Caco-2 (cell line): ENCODE measurements at regions of chr3 and their contacts with region 1.

Region 1: GRCh38 chr3:138946181-138947059 is 517 bp downstream of the FOXL2 start:
- DNase-seq: peak in 1 of 2 experiments; percentile 66
- H3K4me3 ChIP-seq: peak overlapping the region; percentile 53
- H3K4me3 Mint-ChIP-seq: peak overlapping the region; percentile 83
- H3K27ac Mint-ChIP-seq: no peak overlapping the region
- H3K4me1 ChIP-seq: peaks cover 5% of the 10 kb centered on the region
- H3K4me1 Mint-ChIP-seq: peaks cover 8% of the 10 kb centered on the region
- H3K27me3 ChIP-seq: peaks cover 1% of the 10 kb centered on the region; the same call in 1 of the 2 replicates
- H3K27me3 Mint-ChIP-seq: peaks cover 20% of the 10 kb centered on the region
- CTCF ChIP-seq: peak; percentile 31 to 43

Region 2: GRCh38 chr3:138148503-138148902 is 797.9 kb before region 1 on chr3:
- CTCF ChIA-PET with region 1: no interaction called
- POLR2A ChIA-PET with region 1: interaction called, 13 read pairs
- intact Hi-C with region 1: no loop called
- DNase-seq: no peak
- H3K4me3 ChIP-seq: no peak overlapping the region
- H3K4me3 Mint-ChIP-seq: no peak overlapping the region
- H3K27ac Mint-ChIP-seq: no peak overlapping the region
- H3K4me1 ChIP-seq: no peaks in the 10 kb centered on the region
- H3K4me1 Mint-ChIP-seq: no peaks in the 10 kb centered on the region
- H3K27me3 ChIP-seq: no peaks in the 10 kb centered on the region
- H3K27me3 Mint-ChIP-seq: no peaks in the 10 kb centered on the region
- CTCF ChIP-seq: no peak

Region 3: GRCh38 chr3:138923531-138923994 is 22.9 kb before region 1 on chr3:
- CTCF ChIA-PET with region 1: interaction called, 14 read pairs
- POLR2A ChIA-PET with region 1: no interaction called
- intact Hi-C with region 1: no loop called
- DNase-seq: peak; percentile 82 to 89
- H3K4me3 ChIP-seq: no peak overlapping the region
- H3K4me3 Mint-ChIP-seq: no peak overlapping the region
- H3K27ac Mint-ChIP-seq: no peak overlapping the region
- H3K4me1 ChIP-seq: no peaks in the 10 kb centered on the region
- H3K4me1 Mint-ChIP-seq: no peaks in the 10 kb centered on the region
- H3K27me3 ChIP-seq: no peaks in the 10 kb centered on the region
- H3K27me3 Mint-ChIP-seq: no peaks in the 10 kb centered on the region
- CTCF ChIP-seq: peak; percentile 81 to 86

Region 4: DNA sequence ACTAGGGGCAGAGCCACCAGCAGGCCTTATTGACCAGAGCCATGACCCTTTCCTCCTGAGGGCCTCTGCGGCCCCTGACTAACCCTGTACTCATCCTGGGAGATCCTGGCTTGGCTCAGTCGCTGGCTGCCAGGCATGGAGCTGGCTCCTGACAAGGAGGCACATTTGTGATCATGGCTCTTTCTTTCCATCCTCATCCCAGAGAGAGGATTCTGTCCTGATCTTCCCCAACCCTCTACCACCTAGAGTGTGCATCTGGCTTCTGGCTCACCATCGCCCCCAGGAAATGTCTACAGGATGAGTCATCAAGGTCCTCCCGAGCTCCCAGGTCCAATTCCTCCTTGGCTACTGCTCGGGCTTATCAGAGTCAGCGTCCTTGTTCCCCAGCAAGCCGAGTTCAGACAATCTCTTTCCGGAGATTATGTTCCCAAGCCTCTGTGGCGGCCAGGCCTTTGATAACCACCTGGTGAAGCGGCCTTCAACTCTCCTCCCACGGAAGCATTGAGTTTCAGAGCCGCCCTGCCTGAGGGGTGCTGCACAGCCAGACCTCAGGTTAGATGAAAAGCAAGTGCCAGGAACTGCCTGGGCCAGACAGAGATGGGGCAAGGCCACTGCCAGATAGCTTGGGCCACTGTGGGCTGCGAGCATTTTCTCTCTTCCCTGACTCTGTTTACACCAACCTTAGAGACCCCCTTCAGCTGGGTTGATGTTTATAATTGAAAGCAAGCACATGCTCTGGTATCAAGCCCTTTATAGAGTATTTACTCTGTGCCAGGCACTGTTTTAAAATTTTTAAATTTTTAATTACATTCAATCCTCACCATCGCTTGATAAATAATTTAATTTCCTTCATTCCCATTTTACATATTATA is 353.1 kb after region 1 on chr3:
- CTCF ChIA-PET with region 1: no interaction called
- POLR2A ChIA-PET with region 1: no interaction called
- intact Hi-C with region 1: no loop called
- DNase-seq: peak; percentile 39 to 81
- H3K4me3 ChIP-seq: no peak overlapping the region
- H3K4me3 Mint-ChIP-seq: no peak overlapping the region
- H3K27ac Mint-ChIP-seq: no peak overlapping the region
- H3K4me1 ChIP-seq: peaks cover 19% of the 10 kb centered on the region; the same call in 1 of the 2 replicates
- H3K4me1 Mint-ChIP-seq: peaks cover 7% of the 10 kb centered on the region
- H3K27me3 ChIP-seq: no peaks in the 10 kb centered on the region
- H3K27me3 Mint-ChIP-seq: no peaks in the 10 kb centered on the region
- CTCF ChIP-seq: no peak

Region 5: GRCh38 chr3:139343895-139344856 is 397.8 kb after region 1 on chr3 and contains the start of gene MRPS22:
- CTCF ChIA-PET with region 1: no interaction called
- POLR2A ChIA-PET with region 1: no interaction called
- intact Hi-C with region 1: loop called (anchors 5 kb)
- DNase-seq: peak; percentile 83 to 84
- H3K4me3 ChIP-seq: peak within 1 kb of the TSS; percentile 96
- H3K4me3 Mint-ChIP-seq: no peak within 1 kb of the TSS
- H3K27ac Mint-ChIP-seq: peak within 1 kb of the TSS; percentile 16
- H3K4me1 ChIP-seq: peaks cover 6% of the 10 kb centered on the region; the same call in 1 of the 2 replicates
- H3K4me1 Mint-ChIP-seq: peaks cover 7% of the 10 kb centered on the region
- H3K27me3 ChIP-seq: no peaks in the 10 kb centered on the region
- H3K27me3 Mint-ChIP-seq: no peaks in the 10 kb centered on the region
- CTCF ChIP-seq: no peak
- total RNA-seq, gene MRPS22: 58.2 and 63.9 TPM in 2 replicates